ENCODE measurements at regions of chr19 and their contacts with region 1.

Region 1: DNA sequence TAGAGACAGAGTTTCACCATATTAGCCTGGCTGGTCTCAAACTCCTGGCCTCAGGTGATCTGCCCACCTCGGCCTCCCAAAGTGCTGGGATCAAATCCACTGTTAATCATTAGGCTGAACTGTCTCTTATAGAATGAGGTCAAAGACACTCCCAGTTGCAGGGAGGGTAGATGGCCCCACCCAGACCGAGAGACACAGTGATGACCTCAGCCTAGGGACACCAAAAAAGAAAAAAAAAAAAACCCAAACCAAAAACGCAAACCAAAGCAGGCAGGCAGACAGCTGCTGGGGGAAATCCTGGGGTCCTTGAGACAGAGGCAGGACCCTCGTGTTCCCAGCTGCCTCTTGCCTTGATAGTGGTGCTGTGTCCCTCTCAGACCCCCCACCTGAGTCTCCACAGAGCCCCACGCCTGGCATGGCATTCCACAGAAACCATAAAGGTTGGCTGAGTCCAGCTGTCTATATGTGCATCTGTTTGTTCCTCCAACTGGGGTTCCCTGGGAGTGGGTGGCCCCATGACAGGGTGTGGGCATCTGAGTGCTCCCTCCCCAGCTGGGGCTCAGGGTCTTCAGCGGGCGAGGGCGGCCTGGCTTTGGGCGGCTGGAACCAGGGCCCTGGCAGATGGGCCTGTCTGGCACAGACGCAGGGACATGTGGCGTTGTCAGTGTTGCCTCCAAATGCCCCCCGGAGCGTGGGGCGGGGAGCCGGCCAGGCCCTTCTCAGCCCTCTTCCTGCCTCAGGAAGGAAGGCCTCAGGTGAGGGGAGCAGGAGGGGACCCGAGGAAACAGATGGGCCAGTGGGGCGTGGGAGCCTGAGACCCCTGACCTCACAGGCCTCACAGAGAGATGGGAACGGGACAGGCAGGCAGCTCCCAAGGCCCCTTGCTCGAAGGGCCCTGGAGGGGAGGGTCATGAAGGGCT is 5.2 kb downstream of the DAND5 start:
- DNase-seq: no peak
- CTCF ChIP-seq: no peak

Region 2: GRCh38 chr19:13007292-13008045 is 32.9 kb after region 1 on chr19:
- CTCF ChIA-PET with region 1: interaction called, 17 read pairs
- POLR2A ChIA-PET with region 1: no interaction called
- DNase-seq: no peak
- CTCF ChIP-seq: no peak

Region 3: GRCh38 chr19:13033819-13034611 is 59.5 kb after region 1 on chr19:
- CTCF ChIA-PET with region 1: interaction called, 98 read pairs
- POLR2A ChIA-PET with region 1: no interaction called
- DNase-seq: peak; percentile 79
- CTCF ChIP-seq: peak; percentile 69

Region 4: DNA sequence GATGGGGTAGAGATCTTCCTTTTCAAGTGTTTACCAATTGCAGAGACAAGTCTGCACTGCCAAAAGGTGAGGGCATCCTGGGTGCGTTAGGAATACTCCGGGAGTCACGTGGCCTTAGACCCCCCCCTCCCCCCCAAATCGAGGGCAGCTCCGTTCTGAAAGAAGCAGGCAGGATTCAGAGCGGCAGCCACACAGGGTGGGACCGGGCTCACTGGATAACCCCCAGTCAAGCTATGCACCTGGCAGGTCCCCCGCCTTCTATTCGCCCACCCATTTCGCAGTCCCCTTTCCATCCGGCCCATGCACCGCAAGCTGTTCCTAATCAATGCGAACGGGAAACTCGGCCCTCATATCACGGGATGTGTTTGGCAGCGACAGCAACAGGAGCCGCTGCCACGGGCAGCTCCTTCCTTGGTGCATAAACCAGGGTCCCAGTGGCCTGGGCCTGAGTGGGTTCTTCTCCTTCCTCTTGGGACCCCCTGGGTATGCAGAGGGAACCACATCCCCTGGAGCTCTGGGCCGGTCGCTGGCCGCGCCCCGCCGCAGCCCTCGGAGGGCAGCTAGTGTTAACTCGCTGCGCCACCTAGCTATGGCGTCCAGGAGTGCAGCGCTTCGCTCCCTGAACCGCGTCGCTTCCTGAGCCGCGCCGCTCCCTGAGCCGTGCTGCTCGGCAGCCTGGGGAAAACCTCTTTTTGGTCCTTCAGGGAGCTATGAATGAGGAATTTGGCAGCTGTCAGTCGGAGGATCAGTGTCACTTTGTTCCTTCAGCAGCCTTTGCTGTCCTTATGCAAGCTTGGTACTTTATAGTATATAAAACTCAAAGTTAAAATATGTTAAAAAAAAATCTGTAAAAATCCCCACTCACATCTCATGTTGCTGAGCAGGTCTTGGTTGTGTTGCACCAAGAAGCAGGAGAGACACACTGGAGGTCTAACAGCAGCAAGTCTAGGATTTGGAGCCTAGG is 86.7 kb after region 1 on chr19:
- CTCF ChIA-PET with region 1: interaction called, 270 read pairs
- POLR2A ChIA-PET with region 1: no interaction called
- DNase-seq: peak; percentile 91
- CTCF ChIP-seq: peak; percentile 96

Region 5: GRCh38 chr19:13082192-13083007 is 107.8 kb after region 1 on chr19:
- CTCF ChIA-PET with region 1: interaction called, 52 read pairs
- POLR2A ChIA-PET with region 1: no interaction called
- DNase-seq: no peak
- CTCF ChIP-seq: peak; percentile 7

Region 6: DNA sequence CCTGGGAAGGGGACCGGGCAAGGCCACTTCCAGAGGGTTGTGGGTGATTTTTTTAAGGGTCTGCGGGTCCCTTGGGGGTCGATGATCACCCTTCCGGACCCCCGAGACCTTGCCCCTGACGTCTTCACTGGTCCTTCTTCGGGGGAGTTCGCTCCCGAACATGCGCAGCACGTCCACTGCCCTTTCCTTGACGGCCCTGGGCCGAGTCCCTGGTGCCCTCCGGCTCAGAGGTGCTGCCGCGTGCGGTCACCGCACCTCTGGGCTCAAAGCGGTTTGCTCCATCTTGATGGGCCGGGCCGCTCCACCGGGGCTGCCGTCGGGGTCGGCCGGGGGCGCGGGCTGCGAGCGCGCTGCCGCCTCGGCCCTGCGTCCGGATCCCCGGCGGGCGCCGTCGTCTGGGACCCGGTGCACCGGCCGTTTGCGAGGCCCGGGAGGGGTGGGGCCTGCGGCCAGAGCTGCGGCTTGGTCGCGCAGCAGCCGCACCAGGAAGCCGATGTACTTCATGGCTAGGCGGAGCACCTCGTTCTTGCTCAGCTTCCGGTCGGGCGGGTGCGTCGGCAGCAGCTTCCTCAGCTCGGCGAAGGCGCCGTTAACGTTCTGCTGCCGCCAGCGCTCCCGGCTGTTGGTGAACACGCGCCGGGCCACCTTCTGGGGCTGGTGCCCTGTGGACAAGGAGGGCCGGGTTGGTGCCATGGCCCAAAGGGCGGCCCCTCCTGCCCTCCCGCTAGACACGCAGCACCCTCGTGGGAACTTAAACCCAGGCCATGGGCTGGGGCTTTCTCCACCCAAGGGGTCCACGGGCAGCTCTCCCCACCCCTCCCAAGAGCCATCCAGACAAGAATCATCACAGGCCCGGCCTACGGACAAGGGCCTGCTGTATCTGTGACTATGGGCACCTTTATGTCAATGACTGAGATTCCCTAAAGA is 124.8 kb after region 1 on chr19:
- CTCF ChIA-PET with region 1: interaction called, 183 read pairs
- POLR2A ChIA-PET with region 1: no interaction called
- DNase-seq: peak; percentile 80
- CTCF ChIP-seq: no peak

Measured in GM10248 (cell line).